ENCODE measurements at regions of chr4 and their contacts with region 1.

Region 1: DNA sequence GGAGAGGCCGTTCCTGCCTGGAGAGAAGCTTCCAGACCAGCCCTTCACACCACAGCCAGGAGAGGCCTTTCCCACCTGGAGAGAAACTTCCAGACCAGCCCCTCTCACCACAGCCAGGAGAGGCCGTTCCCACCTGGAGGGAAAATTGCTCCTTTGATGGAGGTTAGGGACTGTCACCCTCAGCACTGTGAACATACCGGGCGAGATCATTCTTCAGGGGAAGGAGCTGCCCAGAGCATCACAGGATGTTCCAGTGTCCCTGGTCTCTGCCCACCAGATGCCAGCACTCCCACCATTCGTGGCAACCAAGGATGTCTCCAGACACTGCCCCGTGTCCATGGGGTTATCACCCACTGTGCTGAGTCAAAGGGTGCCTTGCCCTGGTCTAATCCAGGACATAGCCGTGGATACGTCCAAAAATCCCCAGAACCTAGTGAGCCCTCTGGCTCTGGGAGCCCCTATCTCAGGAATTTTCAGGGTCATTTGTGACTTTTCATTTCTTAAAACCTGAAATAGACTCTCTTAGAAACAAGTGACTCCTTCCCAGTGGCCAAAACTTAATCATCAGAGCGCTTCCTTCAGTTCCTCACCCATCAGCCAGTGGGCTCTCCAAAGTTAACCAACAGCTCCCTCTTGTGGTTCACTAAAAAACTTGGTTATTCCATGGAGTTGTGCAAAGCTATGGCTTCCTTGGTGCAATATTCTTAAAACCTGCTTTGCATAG is 80.2 kb downstream of the CRMP1 start:
- DNase-seq: peak; percentile 69
- CTCF ChIP-seq: peak; percentile 67

Region 2: DNA sequence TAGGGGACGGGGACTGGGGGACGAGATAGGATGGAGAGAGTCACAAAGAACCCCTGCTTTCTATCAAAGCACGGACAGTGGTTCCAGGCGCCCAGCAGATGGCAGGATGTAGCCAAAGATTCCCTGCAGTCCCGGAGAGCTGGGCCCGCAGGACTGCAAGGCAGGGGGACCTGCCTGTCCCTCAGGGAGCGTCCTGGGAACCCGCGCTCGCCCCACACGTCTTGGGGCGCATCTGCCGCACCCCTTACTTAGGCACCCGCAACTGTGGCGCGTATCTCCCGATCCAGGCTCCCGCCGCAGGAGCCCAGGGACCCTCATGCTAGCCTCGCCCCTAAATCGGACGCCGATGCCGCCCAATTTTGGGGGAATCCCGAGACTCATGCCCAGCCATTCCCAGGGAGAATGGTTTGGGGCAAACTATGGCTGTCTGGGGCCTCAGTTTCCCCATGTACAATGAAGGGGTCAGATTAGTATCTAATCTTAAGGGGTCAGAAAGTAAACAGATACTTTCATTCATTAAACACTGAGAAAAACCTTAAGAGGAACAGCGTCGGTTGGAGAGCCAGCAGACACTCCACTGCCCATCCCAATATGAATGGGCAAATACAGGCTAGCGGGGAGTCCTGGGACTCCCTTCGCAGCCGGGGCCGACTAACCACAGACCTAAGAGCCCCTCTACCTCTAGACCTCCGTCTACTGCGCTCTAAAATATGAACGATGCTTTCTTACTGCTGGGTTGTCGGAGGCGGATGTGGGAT is 762.0 kb before region 1 on chr4:
- in situ Hi-C with region 1: loop called (anchors 25 kb)
- DNase-seq: peak; percentile 74
- CTCF ChIP-seq: peak; percentile 63

Region 3: DNA sequence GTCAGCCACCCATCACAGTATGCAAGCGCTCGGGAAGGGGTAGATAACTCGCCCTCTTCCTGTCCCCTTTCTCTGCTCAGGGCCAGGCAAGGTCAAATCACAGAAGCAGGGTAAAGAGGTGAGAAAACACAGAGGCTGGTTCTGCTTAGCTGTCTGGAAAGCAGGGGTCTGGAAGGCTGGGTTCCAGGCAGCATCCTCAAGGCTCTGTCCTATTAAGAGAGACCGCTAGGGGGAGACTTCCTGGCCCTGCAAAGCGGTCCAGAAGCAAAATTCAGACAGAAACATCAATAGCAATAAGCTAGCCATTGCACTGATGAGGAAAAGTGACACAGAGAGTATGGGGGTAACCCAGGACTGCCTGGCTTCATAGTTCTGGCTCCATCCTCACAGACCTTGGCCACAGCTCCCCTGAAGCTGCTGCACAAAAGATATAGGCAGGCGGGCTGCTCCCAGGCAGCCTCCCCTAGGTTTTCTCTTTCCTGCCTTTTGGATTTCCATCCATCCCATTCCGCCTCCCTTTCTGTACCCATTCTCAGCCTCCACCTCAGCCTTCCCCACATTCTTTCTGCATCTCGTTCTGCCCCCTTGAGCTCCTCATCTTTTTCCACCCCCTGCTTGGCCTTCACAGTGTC is 412.8 kb before region 1 on chr4:
- in situ Hi-C with region 1: loop called (anchors 25 kb)
- DNase-seq: no peak
- CTCF ChIP-seq: peak; percentile 60